ENCODE measurements at regions of chr11 and their contacts with region 1.

Region 1: GRCh38 chr11:116865696-116866095 is 28.3 kb upstream of the APOA1 start:
- DNase-seq: no peak
- ATAC-seq: no peak
- H3K4me3 ChIP-seq: no peak overlapping the region
- H3K4me3 Mint-ChIP-seq: no peak overlapping the region
- H3K27ac ChIP-seq: no peak overlapping the region
- H3K27ac Mint-ChIP-seq: peak overlapping the region in 3 of 9 donors; percentile 6 to 21 (median 9)
- H3K4me1 ChIP-seq: no peaks in the 10 kb centered on the region
- H3K4me1 Mint-ChIP-seq: peaks cover 0 to 15% (median 0%) of the 10 kb centered on the region in 7 donors
- H3K27me3 ChIP-seq: no peaks in the 10 kb centered on the region
- H3K27me3 Mint-ChIP-seq: no peaks in the 10 kb centered on the region

Region 2: GRCh38 chr11:116853461-116854073 is 12.1 kb before region 1 on chr11:
- CTCF ChIA-PET with region 1: no interaction called
- POLR2A ChIA-PET with region 1: interaction called, 12 read pairs
- intact Hi-C with region 1: no loop called
- DNase-seq: peak in 8 of 9 donors; percentile 53 to 84 (median 77)
- ATAC-seq: peak; percentile 98
- H3K4me3 ChIP-seq: peak overlapping the region; percentile 38
- H3K4me3 Mint-ChIP-seq: peak overlapping the region; percentile 47 to 84 (median 70)
- H3K27ac ChIP-seq: peak overlapping the region; percentile 4
- H3K27ac Mint-ChIP-seq: peak overlapping the region; percentile 41 to 92 (median 81)
- H3K4me1 ChIP-seq: peaks cover 57 to 70% of the 10 kb centered on the region in 2 donors
- H3K4me1 Mint-ChIP-seq: peaks cover 52 to 78% (median 76%) of the 10 kb centered on the region in 7 donors
- H3K27me3 ChIP-seq: no peaks in the 10 kb centered on the region
- H3K27me3 Mint-ChIP-seq: no peaks in the 10 kb centered on the region

Region 3: DNA sequence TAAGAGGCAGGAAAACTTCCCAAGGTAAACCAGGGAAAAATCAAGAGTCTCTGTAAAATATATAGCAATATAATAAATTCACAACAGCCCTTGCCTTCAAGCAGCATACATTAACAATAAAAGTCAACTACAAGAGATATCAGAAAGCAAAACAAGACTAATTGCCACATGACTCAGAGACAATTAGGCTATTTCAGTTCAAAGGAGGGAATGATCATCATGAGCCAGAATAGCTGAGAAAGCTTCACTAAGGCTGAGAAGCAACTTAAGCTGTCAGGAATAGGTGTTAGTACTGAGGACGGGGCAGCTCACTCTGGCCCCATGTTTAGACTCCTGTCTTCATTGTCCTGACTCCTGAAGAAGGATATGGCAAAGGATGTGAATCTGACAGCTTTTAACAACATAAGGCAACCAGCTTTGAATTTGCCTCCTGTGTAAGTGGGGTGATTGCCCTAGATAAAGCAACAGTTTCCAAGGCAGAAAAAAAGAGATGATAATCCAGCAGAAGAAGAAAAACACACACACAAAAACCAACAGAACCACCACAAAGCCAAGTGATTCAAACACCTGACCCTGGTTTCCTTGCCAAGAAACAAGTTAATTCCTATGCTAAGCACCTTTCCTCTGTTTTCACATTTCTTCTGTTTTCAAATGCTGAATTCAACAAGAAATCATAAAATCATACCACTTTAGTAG is 171.7 kb after region 1 on chr11:
- CTCF ChIA-PET with region 1: no interaction called
- POLR2A ChIA-PET with region 1: no interaction called
- intact Hi-C with region 1: no loop called
- DNase-seq: peak in 6 of 9 donors; percentile 21 to 51 (median 38)
- ATAC-seq: peak; percentile 48
- H3K4me3 ChIP-seq: no peak overlapping the region
- H3K4me3 Mint-ChIP-seq: peak overlapping the region; percentile 4 to 68 (median 50)
- H3K27ac ChIP-seq: peak overlapping the region; percentile 58
- H3K27ac Mint-ChIP-seq: peak overlapping the region; percentile 34 to 93 (median 85)
- H3K4me1 ChIP-seq: peaks cover 17 to 24% of the 10 kb centered on the region in 2 donors
- H3K4me1 Mint-ChIP-seq: peaks cover 25 to 79% (median 64%) of the 10 kb centered on the region in 7 donors
- H3K27me3 ChIP-seq: no peaks in the 10 kb centered on the region
- H3K27me3 Mint-ChIP-seq: no peaks in the 10 kb centered on the region

Measured in naive thymus-derived CD4-positive, alpha-beta T cell (primary cell).